CD4-positive, alpha-beta memory T cell (primary cell): ENCODE measurements at regions of chr9 and their contacts with region 1.

Region 1: GRCh38 chr9:132800038-132800648 is 77.9 kb downstream of the AK8 start:
- DNase-seq: peak; percentile 65 to 70 (median 68)
- H3K4me3 ChIP-seq: no peak overlapping the region
- H3K4me3 Mint-ChIP-seq: no peak overlapping the region
- H3K27ac ChIP-seq: no peak overlapping the region
- H3K27ac Mint-ChIP-seq: peak overlapping the region in 1 of 7 donors; percentile 6
- H3K4me1 ChIP-seq: peaks cover 7% of the 10 kb centered on the region
- H3K4me1 Mint-ChIP-seq: peaks cover 4 to 17% (median 9%) of the 10 kb centered on the region in 4 donors
- H3K27me3 ChIP-seq: no peaks in the 10 kb centered on the region
- H3K27me3 Mint-ChIP-seq: peaks cover 16 to 46% of the 10 kb centered on the region in 2 donors

Region 2: GRCh38 chr9:132507746-132508469 is 292.2 kb before region 1 on chr9:
- CTCF ChIA-PET with region 1: interaction called, 23 read pairs
- POLR2A ChIA-PET with region 1: no interaction called
- intact Hi-C with region 1: no loop called
- DNase-seq: peak; percentile 46 to 59 (median 56)
- H3K4me3 ChIP-seq: no peak overlapping the region
- H3K4me3 Mint-ChIP-seq: peak overlapping the region in 4 of 8 donors; percentile 33 to 64 (median 57)
- H3K27ac ChIP-seq: no peak overlapping the region
- H3K27ac Mint-ChIP-seq: peak overlapping the region in 3 of 7 donors; percentile 36 to 64 (median 41)
- H3K4me1 ChIP-seq: peaks cover 21% of the 10 kb centered on the region
- H3K4me1 Mint-ChIP-seq: peaks cover 11 to 22% (median 18%) of the 10 kb centered on the region in 4 donors
- H3K27me3 ChIP-seq: peaks cover 4% of the 10 kb centered on the region
- H3K27me3 Mint-ChIP-seq: peaks cover 1 to 4% of the 10 kb centered on the region in 2 donors

Region 3: DNA sequence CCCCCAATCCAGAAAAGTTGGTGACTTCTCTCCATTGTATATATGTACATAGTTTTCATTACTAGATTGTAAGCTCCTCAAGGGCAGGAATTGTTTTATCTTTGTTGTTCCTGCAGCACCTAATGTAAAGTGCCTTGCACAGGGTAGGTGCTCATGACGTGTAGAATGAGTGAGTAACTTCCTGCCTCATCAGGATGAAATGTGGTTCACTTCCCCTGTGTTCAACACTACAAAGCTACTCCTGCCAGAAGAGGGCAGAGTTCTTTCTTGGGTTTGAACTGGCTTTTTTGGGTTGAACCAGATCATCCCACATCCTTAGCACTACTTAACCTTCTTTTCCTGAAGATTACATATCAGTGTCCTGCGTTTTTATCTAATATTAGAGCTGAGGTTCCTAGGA is 106.0 kb before region 1 on chr9:
- CTCF ChIA-PET with region 1: no interaction called
- POLR2A ChIA-PET with region 1: no interaction called
- intact Hi-C with region 1: loop called (anchors 1 kb)
- DNase-seq: peak in 4 of 5 donors; percentile 8 to 29 (median 20)
- H3K4me3 ChIP-seq: no peak overlapping the region
- H3K4me3 Mint-ChIP-seq: no peak overlapping the region
- H3K27ac ChIP-seq: no peak overlapping the region
- H3K27ac Mint-ChIP-seq: peak overlapping the region in 1 of 7 donors; percentile 13
- H3K4me1 ChIP-seq: no peaks in the 10 kb centered on the region
- H3K4me1 Mint-ChIP-seq: peaks cover 0 to 2% (median under 1%) of the 10 kb centered on the region in 4 donors
- H3K27me3 ChIP-seq: no peaks in the 10 kb centered on the region
- H3K27me3 Mint-ChIP-seq: no peaks in the 10 kb centered on the region

Region 4: GRCh38 chr9:132768932-132769905 is 30.9 kb before region 1 on chr9:
- CTCF ChIA-PET with region 1: interaction called, 8 read pairs
- POLR2A ChIA-PET with region 1: no interaction called
- intact Hi-C with region 1: loop called (anchors 1 kb)
- DNase-seq: peak; percentile 57 to 75 (median 62)
- H3K4me3 ChIP-seq: peak overlapping the region; percentile 83 to 85
- H3K4me3 Mint-ChIP-seq: peak overlapping the region; percentile 95 to 100 (median 99)
- H3K27ac ChIP-seq: peak overlapping the region; percentile 68
- H3K27ac Mint-ChIP-seq: peak overlapping the region; percentile 87 to 99 (median 98)
- H3K4me1 ChIP-seq: peaks cover 16% of the 10 kb centered on the region
- H3K4me1 Mint-ChIP-seq: peaks cover 15 to 37% (median 16%) of the 10 kb centered on the region in 4 donors
- H3K27me3 ChIP-seq: no peaks in the 10 kb centered on the region
- H3K27me3 Mint-ChIP-seq: no peaks in the 10 kb centered on the region

Region 5: DNA sequence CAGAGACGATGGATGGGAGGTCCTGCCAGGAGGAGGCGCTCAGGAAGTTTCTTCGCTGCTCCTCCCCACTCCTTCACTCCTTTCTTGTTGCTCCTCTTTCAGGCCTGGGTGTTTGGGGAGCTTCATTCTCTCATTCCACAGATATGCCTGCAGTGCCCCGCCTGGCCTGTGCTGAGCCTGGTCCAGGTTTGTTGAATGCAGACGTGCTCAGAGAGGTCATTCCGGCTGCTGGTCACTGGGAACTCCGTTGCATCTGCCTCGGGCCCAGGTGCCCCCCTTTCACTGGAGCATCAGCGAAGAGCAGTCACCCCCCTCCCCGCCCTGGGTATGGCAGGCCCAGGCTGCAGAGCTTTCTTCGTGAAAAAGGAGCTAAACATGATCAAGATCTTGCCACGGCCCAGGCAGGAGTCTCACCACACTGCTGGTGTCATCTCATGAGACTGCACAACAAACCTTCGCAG is 520.3 kb after region 1 on chr9:
- CTCF ChIA-PET with region 1: no interaction called
- POLR2A ChIA-PET with region 1: no interaction called
- intact Hi-C with region 1: no loop called
- DNase-seq: no peak
- H3K4me3 ChIP-seq: no peak overlapping the region
- H3K4me3 Mint-ChIP-seq: no peak overlapping the region
- H3K27ac ChIP-seq: no peak overlapping the region
- H3K27ac Mint-ChIP-seq: no peak overlapping the region
- H3K4me1 ChIP-seq: no peaks in the 10 kb centered on the region
- H3K4me1 Mint-ChIP-seq: no peaks in the 10 kb centered on the region
- H3K27me3 ChIP-seq: no peaks in the 10 kb centered on the region
- H3K27me3 Mint-ChIP-seq: peaks cover 0 to 2% of the 10 kb centered on the region in 2 donors